ENCODE measurements at regions of chr3 and their contacts with region 1.

Region 1: GRCh38 chr3:15815696-15816095 is 17.9 kb upstream of the ANKRD28 start:
- DNase-seq: peak in 3 of 14 experiments; percentile 56 to 65 (median 64)
- ATAC-seq: no peak
- H3K4me3 ChIP-seq: no peak overlapping the region
- H3K4me3 Mint-ChIP-seq: no peak overlapping the region
- H3K27ac ChIP-seq: no peak overlapping the region
- H3K27ac Mint-ChIP-seq: no peak overlapping the region
- H3K4me1 ChIP-seq: no peaks in the 10 kb centered on the region
- H3K4me1 Mint-ChIP-seq: peaks cover 51% of the 10 kb centered on the region
- H3K27me3 ChIP-seq: no peaks in the 10 kb centered on the region
- H3K27me3 Mint-ChIP-seq: no peaks in the 10 kb centered on the region
- CTCF ChIP-seq: peak; percentile 51

Region 2: GRCh38 chr3:15629860-15630597 is 185.7 kb before region 1 on chr3:
- CTCF ChIA-PET with region 1: interaction called, 5 read pairs
- POLR2A ChIA-PET with region 1: interaction called, 3 read pairs
- intact Hi-C with region 1: loop called (anchors 1 kb)
- DNase-seq: peak in 13 of 14 experiments; percentile 29 to 86 (median 46)
- ATAC-seq: peak; percentile 100
- H3K4me3 ChIP-seq: peak overlapping the region; percentile 3
- H3K4me3 Mint-ChIP-seq: peak overlapping the region; percentile 35
- H3K27ac ChIP-seq: no peak overlapping the region
- H3K27ac Mint-ChIP-seq: peak overlapping the region; percentile 40
- H3K4me1 ChIP-seq: peaks cover 15% of the 10 kb centered on the region
- H3K4me1 Mint-ChIP-seq: peaks cover 21% of the 10 kb centered on the region
- H3K27me3 ChIP-seq: no peaks in the 10 kb centered on the region
- H3K27me3 Mint-ChIP-seq: no peaks in the 10 kb centered on the region
- CTCF ChIP-seq: peak; percentile 75

Region 3: DNA sequence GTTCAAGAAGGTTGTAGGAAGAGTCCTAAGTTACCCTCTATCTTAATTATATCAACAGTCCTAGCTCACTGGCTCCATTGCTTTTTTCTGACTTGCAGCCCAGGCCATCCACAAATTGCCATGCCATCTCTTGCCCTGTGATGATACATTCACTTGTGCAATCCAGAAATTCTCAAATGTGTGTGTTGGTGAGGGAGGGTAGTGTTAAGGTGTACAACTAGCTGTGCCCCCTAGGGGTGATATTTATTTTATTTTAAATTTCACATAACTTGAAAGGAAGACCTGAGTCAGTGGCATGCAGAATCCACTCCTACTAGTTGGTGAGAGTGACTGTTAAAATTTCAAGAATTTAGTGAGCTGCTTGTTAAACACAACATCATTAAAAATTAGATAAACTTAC is 138.1 kb after region 1 on chr3:
- CTCF ChIA-PET with region 1: no interaction called
- POLR2A ChIA-PET with region 1: no interaction called
- intact Hi-C with region 1: loop called in 1 of 2 experiments (anchors 10 kb)
- DNase-seq: peak in 3 of 14 experiments; percentile 13 to 14 (median 13)
- ATAC-seq: no peak
- H3K4me3 ChIP-seq: no peak overlapping the region
- H3K4me3 Mint-ChIP-seq: no peak overlapping the region
- H3K27ac ChIP-seq: no peak overlapping the region
- H3K27ac Mint-ChIP-seq: no peak overlapping the region
- H3K4me1 ChIP-seq: no peaks in the 10 kb centered on the region
- H3K4me1 Mint-ChIP-seq: no peaks in the 10 kb centered on the region
- H3K27me3 ChIP-seq: no peaks in the 10 kb centered on the region
- H3K27me3 Mint-ChIP-seq: no peaks in the 10 kb centered on the region
- CTCF ChIP-seq: no peak

Region 4: GRCh38 chr3:16048435-16049318 is 233.0 kb after region 1 on chr3:
- CTCF ChIA-PET with region 1: no interaction called
- POLR2A ChIA-PET with region 1: no interaction called
- intact Hi-C with region 1: loop called in 1 of 2 experiments (anchors 5 kb)
- DNase-seq: peak in 11 of 14 experiments; percentile 5 to 70 (median 17)
- ATAC-seq: peak; percentile 87
- H3K4me3 ChIP-seq: no peak overlapping the region
- H3K4me3 Mint-ChIP-seq: no peak overlapping the region
- H3K27ac ChIP-seq: no peak overlapping the region
- H3K27ac Mint-ChIP-seq: no peak overlapping the region
- H3K4me1 ChIP-seq: no peaks in the 10 kb centered on the region
- H3K4me1 Mint-ChIP-seq: peaks cover 6% of the 10 kb centered on the region
- H3K27me3 ChIP-seq: no peaks in the 10 kb centered on the region
- H3K27me3 Mint-ChIP-seq: no peaks in the 10 kb centered on the region
- CTCF ChIP-seq: peak; percentile 82

Region 5: DNA sequence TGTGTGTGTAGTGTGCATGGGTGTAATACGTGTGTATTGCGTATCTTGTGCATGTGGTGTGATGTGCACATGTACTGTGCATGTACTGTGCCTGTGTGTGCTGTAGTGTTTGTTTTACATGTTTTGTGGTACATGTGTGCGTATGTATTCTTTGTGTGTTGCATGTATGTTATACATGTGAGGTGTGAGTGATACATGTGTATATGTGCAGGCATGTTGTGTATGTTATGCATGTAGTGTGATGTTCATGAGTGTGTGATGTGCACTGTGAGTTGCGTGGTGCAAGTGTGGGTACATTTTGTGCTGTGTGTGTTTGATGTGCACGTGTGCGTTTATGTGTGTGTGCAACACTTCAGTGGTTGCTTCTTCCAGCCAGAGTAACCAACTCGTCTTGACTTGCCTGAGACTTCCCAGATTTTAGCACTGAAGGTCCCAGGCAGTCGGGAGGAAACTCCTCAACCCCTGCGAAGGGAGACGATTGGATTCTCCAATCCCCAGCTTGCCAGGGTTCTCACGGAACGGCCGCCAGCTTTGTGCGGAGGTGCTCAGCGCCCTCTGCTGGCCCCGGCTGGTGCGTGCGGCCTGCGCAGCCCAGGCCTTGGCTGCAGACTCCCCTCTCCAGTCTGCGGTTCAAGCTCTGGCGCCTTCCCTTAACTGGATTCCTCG is 362.4 kb after region 1 on chr3:
- CTCF ChIA-PET with region 1: interaction called, 3 read pairs
- POLR2A ChIA-PET with region 1: no interaction called
- intact Hi-C with region 1: loop called (anchors 2 to 5 kb)
- DNase-seq: peak; percentile 24 to 75 (median 48)
- ATAC-seq: peak; percentile 68
- H3K4me3 ChIP-seq: no peak overlapping the region
- H3K4me3 Mint-ChIP-seq: no peak overlapping the region
- H3K27ac ChIP-seq: no peak overlapping the region
- H3K27ac Mint-ChIP-seq: no peak overlapping the region
- H3K4me1 ChIP-seq: peaks cover 7% of the 10 kb centered on the region
- H3K4me1 Mint-ChIP-seq: no peaks in the 10 kb centered on the region
- H3K27me3 ChIP-seq: peaks cover 0 to 2% of the 10 kb centered on the region in 2 experiments
- H3K27me3 Mint-ChIP-seq: peaks cover 22% of the 10 kb centered on the region
- CTCF ChIP-seq: peak; percentile 80

Region 6: DNA sequence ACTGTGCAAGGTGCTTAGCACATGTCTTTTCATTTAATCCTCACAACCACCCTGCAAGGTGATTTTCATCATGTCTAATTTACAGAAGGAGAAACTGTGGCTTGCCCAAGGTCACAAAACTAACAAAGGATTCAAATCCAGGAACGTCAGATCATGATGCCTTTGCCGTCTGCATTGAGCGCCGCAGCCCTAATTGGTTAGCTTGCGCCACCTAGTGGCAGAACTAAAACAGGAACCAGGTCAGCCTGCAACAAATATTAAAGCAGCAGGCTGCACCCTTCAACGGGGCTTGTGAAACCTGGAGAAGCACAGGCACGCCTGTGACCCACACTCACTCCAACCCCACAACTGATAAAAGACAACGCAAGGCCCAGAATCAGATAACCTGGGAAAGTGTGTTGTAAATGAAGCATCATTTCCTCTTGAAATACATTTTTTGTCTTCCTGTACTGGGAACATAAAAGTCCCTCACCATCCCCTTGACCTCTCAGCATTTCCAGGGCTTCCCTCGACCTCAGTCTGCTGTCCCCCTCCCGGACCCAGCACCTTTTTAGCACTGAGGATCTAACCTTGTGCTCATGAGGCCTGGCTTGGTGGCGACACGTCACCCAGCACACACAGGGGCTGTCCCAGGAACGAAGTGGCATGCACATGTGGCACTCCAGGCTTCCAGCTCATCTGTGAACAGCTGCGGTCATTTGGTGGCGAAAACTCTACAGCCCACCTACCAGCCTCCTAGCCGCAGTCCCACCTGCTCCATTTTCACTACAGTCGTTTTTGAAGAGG is 431.8 kb after region 1 on chr3:
- CTCF ChIA-PET with region 1: no interaction called
- POLR2A ChIA-PET with region 1: no interaction called
- intact Hi-C with region 1: loop called (anchors 1 kb)
- DNase-seq: peak; percentile 58 to 89 (median 70)
- ATAC-seq: peak; percentile 94
- H3K4me3 ChIP-seq: no peak overlapping the region
- H3K4me3 Mint-ChIP-seq: no peak overlapping the region
- H3K27ac ChIP-seq: no peak overlapping the region
- H3K27ac Mint-ChIP-seq: no peak overlapping the region
- H3K4me1 ChIP-seq: peaks cover 9% of the 10 kb centered on the region
- H3K4me1 Mint-ChIP-seq: peaks cover 9% of the 10 kb centered on the region
- H3K27me3 ChIP-seq: no peaks in the 10 kb centered on the region
- H3K27me3 Mint-ChIP-seq: no peaks in the 10 kb centered on the region
- CTCF ChIP-seq: peak; percentile 91

Region 7: DNA sequence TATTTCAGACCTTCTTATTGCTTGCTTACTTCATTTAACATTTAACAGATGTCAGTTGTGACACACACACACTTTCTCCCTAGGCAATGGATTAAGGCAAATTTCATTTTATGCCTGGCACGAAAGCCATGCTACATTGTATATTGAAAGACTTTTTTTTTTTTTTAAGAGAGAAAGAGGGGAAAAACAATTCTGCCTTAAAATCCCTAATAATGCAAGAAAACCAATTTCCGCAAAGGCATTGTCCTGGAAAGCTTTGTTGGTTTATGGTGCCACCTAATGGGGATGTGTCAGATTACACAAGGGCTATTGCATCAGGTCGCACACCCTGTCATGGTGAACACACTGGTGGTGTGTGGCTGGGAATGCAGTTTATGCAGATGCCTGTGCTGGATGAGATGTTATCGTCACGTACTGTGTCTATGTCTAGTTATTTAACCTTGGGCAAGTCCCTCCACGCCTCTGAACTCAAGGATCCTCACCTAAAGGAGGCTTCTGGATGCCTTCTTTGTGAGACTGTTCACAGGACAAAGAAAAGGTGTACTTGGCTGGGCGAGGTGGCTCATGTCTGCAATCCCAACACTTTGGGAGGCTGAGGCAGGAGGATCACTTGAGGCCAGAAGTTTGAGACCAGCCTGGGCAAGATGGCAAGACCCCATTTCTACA is 735.1 kb after region 1 on chr3:
- CTCF ChIA-PET with region 1: no interaction called
- POLR2A ChIA-PET with region 1: no interaction called
- intact Hi-C with region 1: loop called in 1 of 2 experiments (anchors 5 kb)
- DNase-seq: peak; percentile 43 to 90 (median 62)
- ATAC-seq: peak; percentile 100
- H3K4me3 ChIP-seq: no peak overlapping the region
- H3K4me3 Mint-ChIP-seq: no peak overlapping the region
- H3K27ac ChIP-seq: no peak overlapping the region
- H3K27ac Mint-ChIP-seq: peak overlapping the region; percentile 16
- H3K4me1 ChIP-seq: peaks cover 5% of the 10 kb centered on the region
- H3K4me1 Mint-ChIP-seq: no peaks in the 10 kb centered on the region
- H3K27me3 ChIP-seq: no peaks in the 10 kb centered on the region
- H3K27me3 Mint-ChIP-seq: peaks cover 4% of the 10 kb centered on the region
- CTCF ChIP-seq: peak; percentile 91